Activated CD8-positive, alpha-beta T cell treated with anti-CD3 and anti-CD28 coated beads for 36 hours (primary cell): ENCODE measurements at regions of chr1 and their contacts with region 1.

Region 1: GRCh38 chr1:173832748-173833147 is 8.1 kb upstream of the CENPL start:
- DNase-seq: no peak
- ATAC-seq: no peak
- H3K4me3 Mint-ChIP-seq: no peak overlapping the region
- H3K27ac Mint-ChIP-seq: no peak overlapping the region
- H3K4me1 Mint-ChIP-seq: peaks cover 7% of the 10 kb centered on the region
- H3K27me3 Mint-ChIP-seq: no peaks in the 10 kb centered on the region
- CTCF ChIP-seq: no peak

Region 2: DNA sequence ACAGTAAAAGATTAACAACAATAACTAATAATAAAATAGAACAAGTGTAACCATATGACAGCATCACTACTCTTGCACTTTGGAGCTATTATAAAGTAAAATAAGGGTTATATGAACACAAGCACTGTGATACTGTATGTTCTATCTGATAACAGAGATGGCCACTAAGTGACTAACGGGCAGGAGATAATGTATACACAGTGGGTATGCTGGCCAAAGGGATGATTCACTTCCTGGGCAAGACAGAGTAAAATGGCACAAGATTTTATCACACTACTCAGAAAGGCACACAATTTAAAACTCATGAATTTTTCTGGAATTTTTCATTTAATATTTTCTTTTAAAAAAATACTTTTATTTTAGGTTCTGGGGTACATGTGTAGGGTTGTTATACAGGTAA is 242.2 kb before region 1 on chr1:
- CTCF ChIA-PET with region 1: no interaction called
- POLR2A ChIA-PET with region 1: no interaction called
- intact Hi-C with region 1: no loop called
- DNase-seq: no peak
- ATAC-seq: no peak
- H3K4me3 Mint-ChIP-seq: no peak overlapping the region
- H3K27ac Mint-ChIP-seq: no peak overlapping the region
- H3K4me1 Mint-ChIP-seq: no peaks in the 10 kb centered on the region
- H3K27me3 Mint-ChIP-seq: no peaks in the 10 kb centered on the region
- CTCF ChIP-seq: no peak

Region 3: GRCh38 chr1:173853074-173853473 is 20.3 kb after region 1 on chr1:
- CTCF ChIA-PET with region 1: no interaction called
- POLR2A ChIA-PET with region 1: interaction called, 10 read pairs
- intact Hi-C with region 1: no loop called
- DNase-seq: no peak
- ATAC-seq: no peak
- H3K4me3 Mint-ChIP-seq: no peak overlapping the region
- H3K27ac Mint-ChIP-seq: no peak overlapping the region
- H3K4me1 Mint-ChIP-seq: no peaks in the 10 kb centered on the region
- H3K27me3 Mint-ChIP-seq: no peaks in the 10 kb centered on the region
- CTCF ChIP-seq: no peak

Region 4: DNA sequence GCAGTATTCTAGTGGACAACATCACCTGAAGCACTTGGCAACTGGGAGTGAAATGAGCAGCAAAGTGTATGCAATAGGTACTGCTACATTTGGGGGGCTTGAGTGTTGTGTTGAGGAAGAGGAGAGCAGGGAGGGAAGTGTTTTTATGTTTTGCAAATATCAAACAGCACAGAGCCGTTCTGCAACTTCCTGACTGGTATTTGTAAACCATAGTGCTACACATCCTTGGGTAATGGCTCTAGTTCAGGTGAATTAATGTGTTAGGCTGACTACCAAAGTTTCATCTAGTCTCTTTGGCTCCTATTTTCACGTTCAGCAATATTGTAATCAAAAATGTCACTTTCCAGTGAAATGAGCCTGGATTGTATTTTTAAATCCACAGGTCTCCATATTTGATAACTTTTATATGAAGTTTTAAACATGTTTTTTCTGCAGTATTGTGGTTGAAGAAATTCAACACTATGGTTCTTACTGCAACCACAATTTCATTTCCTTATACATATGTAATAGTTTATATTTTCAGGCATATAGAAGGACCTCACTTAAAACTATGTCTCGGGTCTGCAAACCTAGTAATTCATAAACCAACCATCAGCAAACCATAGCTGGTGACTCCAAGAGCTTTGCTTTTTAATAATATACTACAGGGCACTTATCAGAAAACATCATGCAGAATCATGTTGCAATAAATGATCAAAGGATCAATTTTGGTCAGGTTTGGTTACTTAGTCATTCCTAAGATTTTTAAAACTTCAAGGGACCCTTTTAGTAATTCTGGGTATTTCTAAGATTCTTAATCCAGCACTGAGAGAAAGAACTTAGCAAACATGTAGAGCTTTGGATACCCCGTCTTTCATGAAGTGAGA is 54.2 kb after region 1 on chr1:
- CTCF ChIA-PET with region 1: no interaction called
- POLR2A ChIA-PET with region 1: no interaction called
- intact Hi-C with region 1: no loop called
- DNase-seq: no peak
- ATAC-seq: no peak
- H3K4me3 Mint-ChIP-seq: no peak overlapping the region
- H3K27ac Mint-ChIP-seq: no peak overlapping the region
- H3K4me1 Mint-ChIP-seq: peaks cover 23% of the 10 kb centered on the region
- H3K27me3 Mint-ChIP-seq: no peaks in the 10 kb centered on the region
- CTCF ChIP-seq: no peak